ENCODE measurements at regions of chr6 and their contacts with region 1.

Region 1: GRCh38 chr6:149223904-149224351 is 93.6 kb upstream of the TAB2 start:
- DNase-seq: no peak
- ATAC-seq: no peak
- H3K4me3 ChIP-seq: no peak overlapping the region
- H3K4me3 Mint-ChIP-seq: no peak overlapping the region
- H3K27ac ChIP-seq: no peak overlapping the region
- H3K27ac Mint-ChIP-seq: no peak overlapping the region
- H3K4me1 ChIP-seq: no peaks in the 10 kb centered on the region
- H3K4me1 Mint-ChIP-seq: peaks cover under 1% of the 10 kb centered on the region
- H3K27me3 ChIP-seq: no peaks in the 10 kb centered on the region
- H3K27me3 Mint-ChIP-seq: no peaks in the 10 kb centered on the region
- CTCF ChIP-seq: no peak

Region 2: DNA sequence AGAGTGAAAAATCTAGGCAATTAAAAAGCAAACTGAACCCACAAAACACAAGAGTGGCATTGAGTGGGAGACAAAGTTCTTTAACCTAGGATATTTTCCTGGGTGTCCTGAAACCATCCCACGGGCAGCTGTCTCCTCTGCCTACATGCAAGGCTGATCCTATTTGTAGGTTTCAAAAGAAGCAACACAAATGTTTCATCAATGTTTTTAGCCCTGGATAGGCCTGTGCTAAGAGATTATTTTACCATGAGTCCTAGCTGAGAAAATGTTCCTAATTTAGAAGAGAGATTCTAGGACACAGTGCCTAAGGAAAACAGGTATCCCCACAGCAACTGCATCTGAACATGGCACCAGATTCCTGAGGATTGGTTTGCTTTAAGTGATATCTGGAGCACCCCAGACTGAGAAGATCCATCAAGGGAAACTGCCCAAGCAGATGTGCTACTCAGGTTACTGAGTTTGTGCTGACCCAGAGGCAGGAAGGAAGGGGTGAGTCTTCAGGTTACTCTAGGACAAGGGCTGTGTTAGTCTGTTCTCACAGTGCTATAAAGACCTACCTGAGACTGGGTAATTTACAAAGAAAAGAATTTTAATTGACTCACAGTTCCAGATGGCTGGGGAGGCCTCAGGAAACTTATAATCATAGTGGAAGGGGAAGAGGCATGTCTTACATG is 588.7 kb before region 1 on chr6:
- CTCF ChIA-PET with region 1: no interaction called
- POLR2A ChIA-PET with region 1: no interaction called
- intact Hi-C with region 1: no loop called
- DNase-seq: no peak
- ATAC-seq: no peak
- H3K4me3 ChIP-seq: no peak overlapping the region
- H3K4me3 Mint-ChIP-seq: no peak overlapping the region
- H3K27ac ChIP-seq: no peak overlapping the region
- H3K27ac Mint-ChIP-seq: no peak overlapping the region
- H3K4me1 ChIP-seq: no peaks in the 10 kb centered on the region
- H3K4me1 Mint-ChIP-seq: peaks cover 5% of the 10 kb centered on the region
- H3K27me3 ChIP-seq: no peaks in the 10 kb centered on the region
- H3K27me3 Mint-ChIP-seq: peaks cover 4% of the 10 kb centered on the region
- CTCF ChIP-seq: no peak

Region 3: GRCh38 chr6:149043476-149044130 is 180.3 kb before region 1 on chr6:
- CTCF ChIA-PET with region 1: no interaction called
- POLR2A ChIA-PET with region 1: no interaction called
- intact Hi-C with region 1: no loop called
- DNase-seq: peak in 1 of 14 experiments; percentile 32
- ATAC-seq: no peak
- H3K4me3 ChIP-seq: no peak overlapping the region
- H3K4me3 Mint-ChIP-seq: no peak overlapping the region
- H3K27ac ChIP-seq: no peak overlapping the region
- H3K27ac Mint-ChIP-seq: no peak overlapping the region
- H3K4me1 ChIP-seq: peaks cover 23% of the 10 kb centered on the region
- H3K4me1 Mint-ChIP-seq: peaks cover 39% of the 10 kb centered on the region
- H3K27me3 ChIP-seq: no peaks in the 10 kb centered on the region
- H3K27me3 Mint-ChIP-seq: no peaks in the 10 kb centered on the region
- CTCF ChIP-seq: no peak

Region 4: DNA sequence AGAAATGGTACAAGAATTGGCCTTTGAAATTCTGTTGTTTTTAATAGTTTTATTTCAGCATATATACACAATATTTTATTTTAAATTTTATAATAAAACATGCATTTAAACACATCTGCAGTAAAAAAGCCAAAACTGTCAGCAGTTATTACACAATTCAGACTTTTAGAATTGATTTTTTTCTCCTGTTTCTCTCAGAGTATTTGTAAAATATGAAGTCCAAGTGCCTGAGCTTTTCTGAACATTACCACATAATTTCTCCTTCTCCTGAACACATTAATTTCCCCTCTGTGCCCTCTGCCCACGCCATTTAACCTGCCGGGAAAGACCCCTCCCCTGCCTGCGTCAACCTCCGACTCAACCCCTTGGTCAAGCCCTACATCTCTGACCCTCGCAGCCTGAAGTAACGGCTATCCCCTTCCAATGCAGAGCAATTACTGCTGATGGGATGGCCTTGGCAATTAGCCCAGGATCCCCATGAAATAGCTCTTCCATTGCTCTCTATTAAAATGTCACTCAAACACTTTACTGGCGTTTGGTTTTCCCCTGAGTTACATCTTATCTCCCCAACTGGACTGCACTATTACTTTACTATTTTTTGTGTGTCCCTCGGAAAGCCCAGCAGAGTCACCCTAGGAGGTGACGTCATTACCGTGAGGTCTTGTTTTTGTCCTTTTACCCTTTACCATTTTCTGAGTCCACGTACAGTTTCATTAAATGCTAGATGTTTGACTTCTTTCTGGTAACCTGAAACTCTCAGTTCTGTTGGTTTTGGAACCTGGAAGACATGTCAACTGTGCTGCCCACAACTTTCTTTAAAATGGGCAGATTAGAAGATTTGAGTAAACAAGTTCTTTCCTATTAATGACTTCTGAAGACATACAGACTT is 53.1 kb before region 1 on chr6:
- CTCF ChIA-PET with region 1: no interaction called
- POLR2A ChIA-PET with region 1: no interaction called
- intact Hi-C with region 1: loop called in 1 of 2 experiments (anchors 5 kb)
- DNase-seq: no peak
- ATAC-seq: no peak
- H3K4me3 ChIP-seq: no peak overlapping the region
- H3K4me3 Mint-ChIP-seq: no peak overlapping the region
- H3K27ac ChIP-seq: no peak overlapping the region
- H3K27ac Mint-ChIP-seq: no peak overlapping the region
- H3K4me1 ChIP-seq: peaks cover 31% of the 10 kb centered on the region
- H3K4me1 Mint-ChIP-seq: peaks cover 33% of the 10 kb centered on the region
- H3K27me3 ChIP-seq: no peaks in the 10 kb centered on the region
- H3K27me3 Mint-ChIP-seq: no peaks in the 10 kb centered on the region
- CTCF ChIP-seq: no peak

Measured in CD4-positive, alpha-beta T cell (primary cell).